RWPE1 (cell line): ENCODE measurements at regions of chr2 and their contacts with region 1.

Region 1: DNA sequence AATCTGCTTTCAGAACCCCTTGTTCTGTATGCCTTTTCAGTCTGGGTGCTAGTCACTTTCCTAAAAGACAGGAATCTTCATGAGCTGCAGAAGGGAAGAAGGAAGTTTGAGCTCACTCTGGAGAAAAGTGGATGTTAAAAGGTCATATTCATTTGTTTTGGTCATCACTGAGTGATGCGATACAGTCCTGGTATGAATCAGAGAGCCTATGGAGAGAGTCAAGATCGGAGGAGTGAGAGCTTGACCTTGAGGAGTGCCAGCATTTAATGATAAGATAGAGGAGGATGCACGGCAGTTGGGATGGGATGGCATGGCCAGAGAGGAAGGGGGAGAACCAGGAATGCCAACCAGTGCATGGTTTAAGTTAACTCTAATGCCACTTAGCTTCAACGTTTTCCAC is 19.6 kb downstream of the USP39 start:
- DNase-seq: no peak
- H3K27ac ChIP-seq: no peak overlapping the region
- CTCF ChIP-seq: no peak

Region 2: GRCh38 chr2:85648619-85649018 is 13.0 kb after region 1 on chr2:
- CTCF ChIA-PET with region 1: interaction called, 17 read pairs
- POLR2A ChIA-PET with region 1: no interaction called
- DNase-seq: peak; percentile 25
- H3K27ac ChIP-seq: no peak overlapping the region
- CTCF ChIP-seq: no peak; the same call in 1 of the 2 replicates